ENCODE measurements at regions of chr15 and their contacts with region 1.

Region 1: DNA sequence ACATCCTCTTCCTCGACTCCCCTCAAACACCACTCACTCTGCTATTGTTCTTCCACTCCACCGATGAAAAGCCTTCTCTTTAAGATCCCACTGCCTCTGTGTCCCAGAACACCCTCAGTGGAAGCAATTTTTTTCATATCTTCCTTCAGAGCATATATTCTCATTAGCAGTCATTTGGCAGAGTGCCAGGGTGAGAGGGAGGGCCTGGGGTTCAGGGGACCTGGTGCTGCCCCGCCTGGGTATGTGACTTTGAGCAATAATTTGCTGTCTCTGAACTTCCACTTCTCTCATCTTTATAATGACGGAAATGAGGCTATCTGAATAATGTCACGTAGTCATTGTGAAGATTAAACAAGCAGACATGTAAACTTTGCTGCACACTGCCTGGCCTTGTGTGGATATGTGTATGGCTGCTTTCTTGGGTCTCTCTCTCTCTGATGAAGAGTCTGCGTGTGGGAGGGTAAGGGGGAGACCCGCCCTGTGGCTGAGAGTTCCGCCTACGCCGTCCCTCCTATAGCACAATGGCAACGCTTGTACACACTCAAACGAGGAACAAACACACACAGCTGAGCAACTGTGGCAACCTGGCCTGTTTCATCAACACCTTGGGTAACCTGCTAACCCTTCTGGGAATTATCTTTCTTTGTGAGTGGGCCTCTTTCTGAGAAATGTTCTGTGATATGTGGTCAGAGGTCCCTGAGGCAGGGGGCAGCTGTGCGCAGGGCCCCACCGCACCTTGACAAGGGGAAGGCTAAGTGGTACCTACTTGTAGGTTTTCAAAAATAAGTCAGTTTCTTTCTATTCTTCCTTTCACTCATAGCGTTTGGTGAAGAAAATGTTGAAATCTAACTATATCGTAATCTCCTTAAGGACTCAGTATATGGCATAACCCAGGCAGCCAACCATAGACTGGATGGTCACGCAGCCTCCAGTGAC is 369.8 kb downstream of the SV2B start:
- DNase-seq: peak; percentile 55 to 90 (median 87)
- H3K4me3 ChIP-seq: no peak overlapping the region
- H3K4me3 Mint-ChIP-seq: peak overlapping the region; percentile 10 to 76 (median 64)
- H3K27ac ChIP-seq: peak overlapping the region; percentile 57
- H3K27ac Mint-ChIP-seq: peak overlapping the region; percentile 87 to 99 (median 95)
- H3K4me1 ChIP-seq: peaks cover 82% of the 10 kb centered on the region
- H3K4me1 Mint-ChIP-seq: peaks cover 39 to 73% (median 53%) of the 10 kb centered on the region in 4 donors
- H3K27me3 ChIP-seq: no peaks in the 10 kb centered on the region
- H3K27me3 Mint-ChIP-seq: no peaks in the 10 kb centered on the region

Region 2: DNA sequence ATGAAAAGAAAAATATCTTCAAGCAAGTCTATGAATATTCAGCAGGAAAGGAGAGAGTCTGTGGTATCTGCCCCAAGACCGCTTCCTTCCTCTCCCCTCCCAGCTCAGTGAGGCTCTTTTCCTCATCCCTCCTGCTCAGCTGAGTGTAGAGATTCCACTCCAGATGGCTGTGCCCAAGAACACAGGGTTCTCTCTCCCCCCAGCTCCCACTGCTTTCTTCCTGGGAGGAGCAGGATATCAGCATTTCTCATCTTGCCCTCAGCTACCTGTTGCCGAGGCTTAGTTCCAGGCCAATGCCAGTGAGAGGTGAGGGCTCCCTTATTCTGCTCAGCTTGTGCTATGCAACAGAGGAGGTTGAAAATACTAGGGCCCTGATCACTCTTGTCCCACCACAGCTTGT is 157.9 kb before region 1 on chr15:
- CTCF ChIA-PET with region 1: no interaction called
- POLR2A ChIA-PET with region 1: interaction called, 4 read pairs
- intact Hi-C with region 1: loop called (anchors 5 kb)
- DNase-seq: peak in 4 of 5 donors; percentile 34 to 56 (median 50)
- H3K4me3 ChIP-seq: peak overlapping the region in 1 of 2 donors; percentile 12
- H3K4me3 Mint-ChIP-seq: peak overlapping the region; percentile 61 to 86 (median 70)
- H3K27ac ChIP-seq: no peak overlapping the region
- H3K27ac Mint-ChIP-seq: peak overlapping the region in 6 of 7 donors; percentile 30 to 78 (median 44)
- H3K4me1 ChIP-seq: peaks cover 79% of the 10 kb centered on the region
- H3K4me1 Mint-ChIP-seq: peaks cover 41 to 88% (median 71%) of the 10 kb centered on the region in 4 donors
- H3K27me3 ChIP-seq: no peaks in the 10 kb centered on the region
- H3K27me3 Mint-ChIP-seq: no peaks in the 10 kb centered on the region

Region 3: DNA sequence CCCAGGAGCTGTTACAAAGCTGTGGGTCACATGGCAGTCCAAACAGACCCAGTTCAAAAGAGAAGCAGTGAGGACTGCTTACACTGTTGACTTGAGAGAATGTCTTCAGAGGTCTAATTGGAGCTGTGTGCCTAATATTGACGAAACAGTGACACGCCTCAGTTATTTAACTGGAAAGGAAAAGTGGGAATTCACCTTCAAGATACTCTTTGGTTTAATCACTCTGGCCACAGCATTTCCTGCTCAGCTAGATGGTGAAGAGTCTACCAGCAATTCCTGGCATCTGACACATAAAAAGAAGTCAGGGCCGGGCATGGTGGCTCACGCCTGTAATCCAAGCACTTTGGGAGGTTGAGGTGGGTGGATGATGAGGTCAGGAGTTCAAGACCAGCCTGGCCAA is 43.5 kb before region 1 on chr15:
- CTCF ChIA-PET with region 1: interaction called, 3 read pairs
- POLR2A ChIA-PET with region 1: no interaction called
- intact Hi-C with region 1: loop called (anchors 5 kb)
- DNase-seq: peak in 2 of 5 donors; percentile 17 to 62
- H3K4me3 ChIP-seq: no peak overlapping the region
- H3K4me3 Mint-ChIP-seq: peak overlapping the region in 3 of 8 donors; percentile 8 to 36 (median 30)
- H3K27ac ChIP-seq: no peak overlapping the region
- H3K27ac Mint-ChIP-seq: peak overlapping the region in 3 of 7 donors; percentile 25 to 66 (median 54)
- H3K4me1 ChIP-seq: peaks cover 52% of the 10 kb centered on the region
- H3K4me1 Mint-ChIP-seq: peaks cover 24 to 84% (median 28%) of the 10 kb centered on the region in 4 donors
- H3K27me3 ChIP-seq: no peaks in the 10 kb centered on the region
- H3K27me3 Mint-ChIP-seq: no peaks in the 10 kb centered on the region

Region 4: DNA sequence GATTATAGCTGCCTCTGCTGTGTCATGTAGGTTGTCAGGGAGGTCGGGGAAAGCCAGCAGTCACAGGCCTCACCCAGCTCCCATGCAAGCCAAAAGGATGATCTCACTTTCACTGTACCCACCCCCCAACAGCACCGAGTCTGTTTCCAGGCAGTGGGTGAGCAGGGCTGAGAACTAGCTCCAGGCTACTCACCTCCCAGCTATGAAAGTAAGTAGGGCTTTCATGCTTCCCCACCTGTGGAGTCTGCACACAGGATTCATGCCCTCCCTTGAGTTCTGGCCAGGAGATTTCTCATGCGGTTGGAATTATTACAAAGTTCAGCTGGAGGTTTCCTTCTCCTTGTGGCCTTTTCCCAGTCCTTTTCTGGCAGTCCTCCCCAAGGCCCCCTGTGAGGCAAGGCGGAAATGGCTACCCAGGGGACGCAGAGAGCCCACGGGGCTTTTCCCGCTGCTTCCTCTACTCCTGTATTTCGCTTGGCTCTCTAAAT is 13.6 kb before region 1 on chr15:
- CTCF ChIA-PET with region 1: interaction called, 5 read pairs
- POLR2A ChIA-PET with region 1: interaction called, 13 read pairs
- intact Hi-C with region 1: loop called (anchors 1 kb)
- DNase-seq: no peak
- H3K4me3 ChIP-seq: no peak overlapping the region
- H3K4me3 Mint-ChIP-seq: no peak overlapping the region
- H3K27ac ChIP-seq: no peak overlapping the region
- H3K27ac Mint-ChIP-seq: peak overlapping the region in 2 of 7 donors; percentile 21 to 67
- H3K4me1 ChIP-seq: peaks cover 29% of the 10 kb centered on the region
- H3K4me1 Mint-ChIP-seq: peaks cover 19 to 61% (median 39%) of the 10 kb centered on the region in 4 donors
- H3K27me3 ChIP-seq: no peaks in the 10 kb centered on the region
- H3K27me3 Mint-ChIP-seq: peaks cover 0 to 1% of the 10 kb centered on the region in 2 donors

Region 5: DNA sequence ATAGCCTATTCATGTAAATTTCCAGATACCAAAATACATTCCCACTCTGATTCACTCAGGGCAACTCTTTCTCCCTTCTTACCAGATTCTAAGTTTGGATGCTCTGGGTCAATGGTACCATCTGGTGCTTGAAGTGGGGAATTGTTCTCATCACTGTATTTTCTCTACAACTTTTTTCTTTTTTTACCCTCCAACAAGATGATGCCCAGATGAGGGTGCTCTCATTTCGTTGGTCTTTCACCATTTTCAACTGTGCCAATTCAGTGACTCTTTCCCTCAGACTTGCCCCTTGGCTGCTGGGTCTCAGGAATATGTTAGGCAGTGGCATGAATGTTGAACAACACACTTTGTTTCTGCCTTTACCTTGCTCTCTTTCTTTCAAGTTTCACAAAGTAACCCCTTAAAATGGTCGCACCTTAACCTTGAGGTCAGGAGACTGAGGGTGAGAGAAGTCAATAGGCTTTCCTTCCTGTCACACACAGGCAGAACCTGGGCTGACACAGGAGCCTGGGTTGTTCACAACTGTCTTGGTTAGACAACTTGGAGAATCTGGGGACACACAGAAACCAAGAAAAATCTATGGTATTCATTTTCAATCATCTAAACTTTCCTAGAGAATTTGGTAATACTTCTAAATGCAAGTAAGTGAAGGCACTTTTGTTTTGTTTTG is 52.9 kb after region 1 on chr15:
- CTCF ChIA-PET with region 1: no interaction called
- POLR2A ChIA-PET with region 1: no interaction called
- intact Hi-C with region 1: loop called (anchors 5 kb)
- DNase-seq: peak in 4 of 5 donors; percentile 37 to 52 (median 40)
- H3K4me3 ChIP-seq: no peak overlapping the region
- H3K4me3 Mint-ChIP-seq: peak overlapping the region in 3 of 8 donors; percentile 7 to 29 (median 12)
- H3K27ac ChIP-seq: no peak overlapping the region
- H3K27ac Mint-ChIP-seq: peak overlapping the region in 4 of 7 donors; percentile 23 to 68 (median 36)
- H3K4me1 ChIP-seq: peaks cover 25% of the 10 kb centered on the region
- H3K4me1 Mint-ChIP-seq: peaks cover 19 to 37% (median 24%) of the 10 kb centered on the region in 4 donors
- H3K27me3 ChIP-seq: no peaks in the 10 kb centered on the region
- H3K27me3 Mint-ChIP-seq: peaks cover 1 to 6% of the 10 kb centered on the region in 2 donors

Region 6: DNA sequence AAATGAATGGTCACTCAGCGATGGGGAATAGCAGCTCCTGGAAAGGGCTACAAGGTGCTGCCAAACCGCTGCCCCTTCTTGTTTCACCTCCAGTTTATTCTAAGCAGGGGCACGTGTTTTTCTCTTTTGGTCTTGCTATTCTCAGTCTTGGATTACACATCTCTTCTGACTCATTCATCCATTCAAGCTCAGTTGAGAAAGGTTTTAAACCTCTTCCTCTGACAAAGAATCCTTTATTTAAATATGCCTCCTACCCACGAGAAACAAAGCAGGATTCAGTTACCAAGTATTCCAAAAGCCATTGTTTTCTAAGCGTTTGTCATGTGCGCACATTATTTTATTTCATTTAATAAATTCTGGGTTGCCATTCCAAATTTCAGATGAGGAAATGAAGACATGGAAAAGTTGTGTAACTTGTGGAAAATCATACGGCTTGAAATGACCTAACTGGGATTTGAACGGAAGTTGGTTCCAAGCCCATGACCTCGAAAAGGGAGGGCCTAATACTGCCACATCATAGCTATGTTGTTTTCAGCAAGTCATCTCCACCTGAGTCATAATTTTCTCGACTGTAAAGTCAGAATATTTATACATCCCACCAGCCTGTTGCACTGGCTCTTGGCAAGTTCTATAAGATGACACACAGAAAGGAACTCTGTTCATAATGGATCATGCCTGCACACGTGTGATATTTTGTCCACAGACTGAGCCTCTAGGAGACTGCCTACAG is 91.6 kb after region 1 on chr15:
- CTCF ChIA-PET with region 1: no interaction called
- POLR2A ChIA-PET with region 1: no interaction called
- intact Hi-C with region 1: no loop called
- DNase-seq: no peak
- H3K4me3 ChIP-seq: no peak overlapping the region
- H3K4me3 Mint-ChIP-seq: no peak overlapping the region
- H3K27ac ChIP-seq: no peak overlapping the region
- H3K27ac Mint-ChIP-seq: peak overlapping the region in 1 of 7 donors; percentile 2
- H3K4me1 ChIP-seq: no peaks in the 10 kb centered on the region
- H3K4me1 Mint-ChIP-seq: no peaks in the 10 kb centered on the region
- H3K27me3 ChIP-seq: no peaks in the 10 kb centered on the region
- H3K27me3 Mint-ChIP-seq: peaks cover 10% of the 10 kb centered on the region in 2 donors